Posterior vena cava (tissue), 2 donors: ENCODE measurements at regions of chr1 and their contacts with region 1.

Region 1: DNA sequence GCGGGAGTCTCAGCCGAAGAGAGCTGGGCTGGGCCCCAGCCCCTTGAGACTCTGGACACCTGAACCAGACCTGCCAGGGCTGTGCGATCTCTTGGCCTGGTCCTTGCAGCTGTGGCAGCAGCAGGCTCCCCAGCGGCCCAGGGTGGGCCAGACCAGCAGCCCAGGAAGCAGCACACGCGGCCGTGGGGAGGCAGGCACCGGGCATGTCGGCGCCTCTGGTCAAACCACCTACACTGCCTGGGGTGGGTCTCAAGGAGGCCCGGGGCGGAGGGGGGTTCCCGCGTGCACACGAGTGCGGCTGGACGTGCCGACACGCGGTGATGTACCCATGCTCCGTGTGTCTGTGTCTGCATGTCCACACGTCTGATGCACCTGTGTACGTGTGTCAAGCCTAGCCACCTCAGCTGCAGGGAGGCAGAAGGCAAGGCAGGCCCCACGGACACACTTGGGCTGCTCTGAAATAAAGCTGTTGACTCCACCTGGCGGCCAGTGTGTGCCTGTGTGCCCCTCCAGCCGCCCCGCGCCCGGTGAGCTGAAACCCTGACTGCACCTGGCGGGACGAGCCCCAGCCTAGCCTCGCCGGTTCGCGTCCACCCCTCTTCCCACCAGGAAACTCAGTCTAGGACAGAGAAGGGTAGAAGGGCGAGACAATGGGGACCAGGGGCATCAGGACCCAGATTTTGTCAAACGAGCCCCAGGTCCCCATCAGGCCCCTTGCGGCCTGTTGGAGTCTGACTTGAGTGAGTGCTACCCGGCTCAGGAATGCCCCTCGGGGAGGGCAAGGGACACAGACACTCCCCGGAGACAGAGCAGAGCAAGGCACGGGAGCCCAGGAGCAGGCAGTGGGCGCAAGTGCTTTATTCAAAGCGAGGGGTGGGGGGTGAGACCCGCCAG is 11.6 kb downstream of the SCNN1D start:
- DNase-seq: no peak

Region 2: DNA sequence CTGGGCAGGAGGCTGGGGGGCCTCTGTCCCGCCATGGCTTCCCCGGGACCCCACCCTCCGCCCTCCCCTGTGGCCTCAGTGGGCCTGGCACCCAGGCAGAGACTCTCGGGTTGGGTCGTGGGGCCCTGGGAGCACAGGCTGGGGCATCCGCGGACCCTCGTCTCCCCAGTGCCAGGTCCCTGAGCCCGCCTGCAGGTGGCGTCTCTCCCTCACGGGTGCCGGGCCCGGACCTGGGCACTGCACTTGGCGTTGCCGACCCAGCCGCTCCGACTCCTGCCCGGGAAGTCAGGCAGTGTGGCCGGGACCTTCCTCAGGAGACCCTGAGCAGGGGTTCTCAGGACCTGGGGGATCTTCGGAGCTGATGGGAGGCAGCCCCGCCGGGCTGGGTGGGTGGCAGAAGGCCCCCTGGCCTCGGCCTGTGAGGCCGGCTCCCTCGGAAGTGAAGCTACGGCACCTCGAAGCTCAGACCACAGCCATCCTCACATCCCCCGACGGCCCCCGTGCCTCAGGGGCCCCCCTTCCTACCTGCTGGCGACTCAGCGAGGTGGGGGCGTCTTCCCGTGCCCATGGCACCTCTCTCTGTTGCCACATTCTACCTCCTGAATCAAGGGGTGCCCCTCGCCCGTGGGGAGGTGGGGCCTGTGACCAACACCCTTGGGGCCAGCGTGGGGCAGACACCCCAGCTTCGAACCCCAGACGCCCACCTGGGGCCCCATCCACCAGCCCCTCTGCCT is 169.6 kb before region 1 on chr1:
- intact Hi-C with region 1: loop called (anchors 1 to 5 kb)
- DNase-seq: peak; percentile 94

Region 3: DNA sequence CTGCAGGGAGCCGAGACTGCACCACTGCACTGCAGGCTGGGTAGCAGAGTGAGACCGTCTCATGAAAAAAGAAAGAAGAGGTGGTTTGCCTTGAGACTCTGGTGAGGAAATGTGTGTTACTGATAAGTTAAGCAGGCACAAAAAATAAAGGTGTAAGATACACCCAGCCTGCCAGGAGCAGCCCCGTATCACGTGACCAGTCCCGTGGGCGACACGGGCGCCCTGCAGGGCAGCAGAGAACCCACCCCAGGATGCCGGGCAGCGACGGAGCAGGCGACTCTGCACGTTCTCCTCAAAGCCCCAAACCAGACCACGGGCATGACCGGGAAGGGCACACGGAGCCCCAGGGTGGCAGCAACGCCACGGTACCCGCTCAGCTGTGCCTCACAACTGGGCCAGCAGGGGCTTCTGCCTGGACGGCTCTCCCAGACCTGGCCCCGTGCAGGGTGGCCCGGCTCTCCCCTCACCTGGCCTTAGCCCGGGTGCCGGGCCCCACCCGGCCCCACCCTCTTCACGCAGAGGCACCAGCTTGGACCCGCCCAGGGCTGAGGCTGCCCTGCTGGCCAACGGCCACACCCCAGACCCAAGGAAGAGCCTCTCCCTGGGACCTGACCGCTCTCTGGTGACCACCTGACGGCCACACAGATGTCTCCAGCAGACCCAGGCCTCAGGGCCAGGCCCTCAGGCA is 69.8 kb before region 1 on chr1:
- intact Hi-C with region 1: loop called in 1 of 2 experiments (anchors 2 kb)
- DNase-seq: no peak